SK-N-SH (cell line): ENCODE measurements at regions of chr5 and their contacts with region 1.

Region 1: GRCh38 chr5:72108202-72109061 is 1.2 kb downstream of the MAP1B start:
- DNase-seq: peak; percentile 82
- H3K4me3 ChIP-seq: peak overlapping the region; percentile 83 to 97
- H3K27ac ChIP-seq: peak overlapping the region; percentile 78 to 97
- H3K4me1 ChIP-seq: peaks cover 16 to 38% of the 10 kb centered on the region in 2 experiments
- H3K27me3 ChIP-seq: no peaks in the 10 kb centered on the region
- CTCF ChIP-seq: no peak
- EP300 ChIP-seq: no peak
- RAD21 ChIP-seq: no peak

Region 2: DNA sequence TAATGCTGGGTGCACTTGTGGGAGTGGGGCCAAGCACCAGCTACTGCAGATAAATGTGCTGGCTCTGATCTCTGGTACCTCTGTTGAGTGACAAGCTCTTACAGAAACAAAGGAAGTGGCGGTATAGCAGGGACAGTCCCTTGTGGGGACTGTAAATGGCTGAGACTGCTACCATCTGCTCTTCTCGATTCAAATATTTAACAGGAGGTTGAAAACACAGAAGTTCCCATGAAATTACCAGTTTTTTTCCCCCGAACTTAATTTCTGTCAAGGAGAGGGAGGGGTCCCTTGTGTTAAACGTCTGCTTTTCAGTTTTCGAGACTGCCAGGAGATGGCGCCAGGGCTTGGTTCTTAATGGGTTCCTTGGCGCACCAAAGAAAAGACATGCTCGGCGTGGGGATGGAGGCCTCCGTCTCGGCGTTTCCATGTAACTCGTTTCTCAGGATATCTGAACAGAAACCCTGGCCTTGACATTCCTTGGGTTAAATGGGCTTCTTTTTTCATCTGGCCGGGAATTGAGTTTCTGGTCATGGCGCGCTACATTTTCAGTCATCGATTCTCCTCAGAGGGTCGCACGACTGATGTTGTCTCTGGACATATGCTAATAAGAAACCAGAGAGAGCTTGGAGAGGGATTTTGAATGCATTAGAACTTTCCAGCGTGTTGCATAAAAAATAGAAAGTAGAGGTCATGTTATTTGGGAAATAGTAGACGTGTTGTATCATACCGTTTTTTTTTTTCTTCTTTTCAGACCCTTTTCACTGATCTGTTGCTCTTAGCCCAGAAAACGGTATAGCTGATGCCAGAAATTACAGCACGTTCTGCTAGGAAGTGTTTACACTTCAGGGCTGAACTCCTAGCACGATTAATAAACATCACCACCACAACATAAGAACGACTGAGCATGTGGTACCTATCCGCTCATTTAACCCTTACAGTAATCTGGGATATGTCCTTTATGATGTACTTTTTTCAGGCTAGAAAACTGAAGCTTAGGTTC is 325.4 kb before region 1 on chr5:
- CTCF ChIA-PET with region 1: interaction called, 26 read pairs
- POLR2A ChIA-PET with region 1: interaction called, 5 read pairs
- DNase-seq: peak; percentile 68
- H3K4me3 ChIP-seq: peak overlapping the region in 1 of 2 experiments; percentile 40; a peak in 1 of 4 replicates
- H3K27ac ChIP-seq: 0 out of 4 replicates have a peak overlapping the region, but pooled peaks of 1 of the 2 experiments have one; percentile 6
- H3K4me1 ChIP-seq: peaks cover 4 to 13% of the 10 kb centered on the region in 2 experiments; a peak in 2 of 4 replicates
- H3K27me3 ChIP-seq: no peaks in the 10 kb centered on the region
- CTCF ChIP-seq: peak; percentile 83
- EP300 ChIP-seq: no peak
- RAD21 ChIP-seq: peak; percentile 85

Region 3: DNA sequence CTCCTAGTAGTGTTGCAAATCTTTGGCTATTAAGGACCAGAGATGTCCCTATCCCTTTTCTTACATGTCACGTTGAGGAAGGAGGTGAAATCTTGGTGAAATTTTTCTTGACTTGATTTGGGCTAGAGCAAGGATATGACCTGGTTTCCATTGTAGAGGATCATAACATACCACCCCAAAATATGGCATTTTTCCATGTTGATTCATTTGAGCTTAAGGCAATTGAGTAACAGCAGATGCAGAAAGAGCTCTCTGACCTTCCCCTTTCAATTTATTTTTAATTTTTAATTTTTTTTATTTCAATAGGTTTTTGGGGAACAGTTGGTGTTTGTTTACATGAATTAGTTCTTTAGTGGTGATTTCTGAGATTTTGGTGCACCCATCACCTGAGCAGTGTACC is 62.3 kb before region 1 on chr5:
- CTCF ChIA-PET with region 1: no interaction called
- POLR2A ChIA-PET with region 1: no interaction called
- DNase-seq: no peak
- H3K4me3 ChIP-seq: no peak overlapping the region
- H3K27ac ChIP-seq: no peak overlapping the region
- H3K4me1 ChIP-seq: peaks cover 0 to 2% of the 10 kb centered on the region in 2 experiments; a peak in 2 of 4 replicates
- H3K27me3 ChIP-seq: no peaks in the 10 kb centered on the region
- CTCF ChIP-seq: no peak
- EP300 ChIP-seq: no peak
- RAD21 ChIP-seq: no peak

Region 4: GRCh38 chr5:72065751-72066255 is 42.6 kb before region 1 on chr5:
- CTCF ChIA-PET with region 1: interaction called, 3 read pairs
- POLR2A ChIA-PET with region 1: interaction called, 13 read pairs
- DNase-seq: peak; percentile 72
- H3K4me3 ChIP-seq: no peak overlapping the region
- H3K27ac ChIP-seq: peak overlapping the region; percentile 97 to 98
- H3K4me1 ChIP-seq: peaks cover 25 to 35% of the 10 kb centered on the region in 2 experiments
- H3K27me3 ChIP-seq: no peaks in the 10 kb centered on the region
- CTCF ChIP-seq: no peak
- EP300 ChIP-seq: peak; percentile 17 to 64; a peak in 1 of 4 replicates
- RAD21 ChIP-seq: peak; percentile 18

Region 5: DNA sequence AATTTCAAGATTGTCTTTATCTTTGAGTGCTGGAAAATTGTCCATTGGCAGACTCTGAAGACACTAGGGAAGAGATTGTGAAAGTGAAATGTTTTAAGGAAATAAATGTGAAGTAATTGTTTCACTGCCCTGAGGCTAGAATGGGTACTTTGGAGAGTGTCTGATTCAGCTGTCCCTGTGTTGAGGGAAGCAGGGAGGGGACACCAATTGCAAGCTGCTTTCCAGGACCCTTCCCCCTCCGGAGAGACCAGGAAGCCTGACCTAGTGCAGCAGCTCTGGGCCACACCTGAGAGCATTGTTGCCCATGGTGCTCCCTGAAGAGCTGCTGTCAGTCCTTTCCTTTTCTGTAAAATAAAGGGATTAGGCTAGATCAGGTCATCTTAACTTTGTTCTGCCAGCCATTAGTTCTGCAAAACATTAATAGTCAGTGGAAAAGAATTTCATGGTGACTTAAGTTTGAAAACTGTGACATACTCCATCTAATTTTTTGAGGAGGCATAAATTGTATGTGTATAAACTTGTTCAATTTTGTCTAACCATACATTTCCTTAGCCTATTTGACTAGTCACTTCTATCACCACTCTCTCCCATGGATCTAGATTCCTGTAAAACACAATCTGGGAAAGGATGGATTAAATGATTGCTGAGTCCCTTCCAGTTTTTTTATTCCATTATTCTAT is 17.6 kb after region 1 on chr5:
- CTCF ChIA-PET with region 1: interaction called, 24 read pairs
- POLR2A ChIA-PET with region 1: no interaction called
- DNase-seq: peak; percentile 19
- H3K4me3 ChIP-seq: no peak overlapping the region
- H3K27ac ChIP-seq: peak overlapping the region; percentile 75 to 94
- H3K4me1 ChIP-seq: peaks cover 40 to 85% of the 10 kb centered on the region in 2 experiments
- H3K27me3 ChIP-seq: no peaks in the 10 kb centered on the region
- CTCF ChIP-seq: no peak
- EP300 ChIP-seq: no peak
- RAD21 ChIP-seq: no peak

Region 6: DNA sequence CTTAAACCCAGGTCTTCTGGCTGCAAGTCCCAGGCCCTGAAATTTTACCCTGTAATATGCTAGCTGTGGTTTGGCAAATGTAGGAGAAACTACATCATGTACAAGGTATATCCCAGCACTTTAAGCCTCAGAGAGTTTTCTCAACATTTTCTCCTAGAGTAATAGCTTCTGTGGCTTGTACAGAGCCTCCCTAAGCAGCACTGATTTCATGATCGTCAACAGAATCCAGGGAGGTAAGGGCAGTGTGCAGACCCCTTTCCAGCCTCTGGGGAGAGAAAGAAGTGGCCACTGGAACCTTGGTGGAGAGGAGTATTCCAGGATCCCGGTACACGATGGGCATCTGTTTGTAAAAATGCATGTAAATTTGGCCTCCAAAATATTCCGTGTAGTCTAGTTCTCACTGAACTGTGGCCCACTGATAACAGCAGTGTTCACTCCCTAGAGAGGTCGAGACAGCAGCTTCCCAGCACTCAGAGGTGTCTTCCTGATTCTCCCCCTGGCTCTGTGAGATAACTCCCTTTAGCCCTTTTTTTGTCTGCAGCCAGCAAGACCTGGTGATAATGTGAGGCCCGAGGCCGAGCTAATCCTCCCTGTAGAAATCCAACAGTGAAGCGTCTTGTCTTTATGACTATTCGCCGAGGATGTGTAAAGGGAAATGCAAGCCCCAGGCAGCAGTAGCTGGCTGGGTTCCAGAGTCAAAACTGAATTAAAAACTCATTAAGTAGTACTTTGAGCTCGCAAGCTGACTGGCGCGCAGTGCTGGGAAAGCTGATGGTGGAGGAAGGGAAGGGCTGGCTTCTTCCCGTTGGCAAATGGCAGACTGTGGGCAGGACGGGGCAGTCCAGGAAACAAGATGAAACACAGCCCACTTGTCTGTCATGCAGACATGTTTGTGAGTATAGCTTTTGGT is 57.9 kb after region 1 on chr5:
- CTCF ChIA-PET with region 1: interaction called, 9 read pairs
- POLR2A ChIA-PET with region 1: interaction called, 11 read pairs
- DNase-seq: peak; percentile 78
- H3K4me3 ChIP-seq: peak overlapping the region in 1 of 2 experiments; percentile 13; a peak in 1 of 4 replicates
- H3K27ac ChIP-seq: peak overlapping the region; percentile 83 to 100
- H3K4me1 ChIP-seq: peaks cover 52 to 55% of the 10 kb centered on the region in 2 experiments
- H3K27me3 ChIP-seq: no peaks in the 10 kb centered on the region
- CTCF ChIP-seq: no peak
- EP300 ChIP-seq: peak in 1 of 2 experiments; percentile 89; a peak in 2 of 4 replicates
- RAD21 ChIP-seq: peak; percentile 19

Region 7: DNA sequence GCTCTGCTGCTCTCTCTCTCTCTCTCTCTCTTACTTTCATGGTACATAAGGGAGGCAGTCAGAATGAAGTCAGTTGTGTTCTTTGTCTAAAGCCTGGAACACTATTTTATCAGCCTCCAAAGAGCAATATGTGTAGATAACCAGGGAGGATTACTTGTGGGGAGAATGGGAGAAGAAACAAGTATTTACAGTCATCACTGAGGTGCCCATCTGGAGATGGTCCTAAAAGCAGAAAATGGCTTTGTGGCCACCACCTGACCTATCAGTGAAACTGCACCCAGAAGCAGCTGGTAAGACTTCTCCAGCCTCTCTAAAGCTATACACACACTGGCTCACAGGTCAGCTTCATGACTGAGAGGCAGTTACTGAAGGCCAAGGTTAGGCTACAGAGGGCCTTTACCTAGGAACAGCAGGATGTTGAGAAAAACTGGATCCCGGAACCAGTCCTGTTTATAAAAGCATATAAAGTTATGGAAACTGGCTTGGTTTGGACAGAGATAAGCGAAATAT is 136.5 kb after region 1 on chr5:
- CTCF ChIA-PET with region 1: interaction called, 31 read pairs
- POLR2A ChIA-PET with region 1: no interaction called
- DNase-seq: peak; percentile 43
- H3K4me3 ChIP-seq: no peak overlapping the region
- H3K27ac ChIP-seq: peak overlapping the region; percentile 91 to 99
- H3K4me1 ChIP-seq: peaks cover 16 to 50% of the 10 kb centered on the region in 2 experiments
- H3K27me3 ChIP-seq: no peaks in the 10 kb centered on the region
- CTCF ChIP-seq: peak; percentile 62
- EP300 ChIP-seq: no peak
- RAD21 ChIP-seq: peak; percentile 81